Naive thymus-derived CD4-positive, alpha-beta T cell (primary cell): ENCODE measurements at regions of chr11 and their contacts with region 1.

Region 1: DNA sequence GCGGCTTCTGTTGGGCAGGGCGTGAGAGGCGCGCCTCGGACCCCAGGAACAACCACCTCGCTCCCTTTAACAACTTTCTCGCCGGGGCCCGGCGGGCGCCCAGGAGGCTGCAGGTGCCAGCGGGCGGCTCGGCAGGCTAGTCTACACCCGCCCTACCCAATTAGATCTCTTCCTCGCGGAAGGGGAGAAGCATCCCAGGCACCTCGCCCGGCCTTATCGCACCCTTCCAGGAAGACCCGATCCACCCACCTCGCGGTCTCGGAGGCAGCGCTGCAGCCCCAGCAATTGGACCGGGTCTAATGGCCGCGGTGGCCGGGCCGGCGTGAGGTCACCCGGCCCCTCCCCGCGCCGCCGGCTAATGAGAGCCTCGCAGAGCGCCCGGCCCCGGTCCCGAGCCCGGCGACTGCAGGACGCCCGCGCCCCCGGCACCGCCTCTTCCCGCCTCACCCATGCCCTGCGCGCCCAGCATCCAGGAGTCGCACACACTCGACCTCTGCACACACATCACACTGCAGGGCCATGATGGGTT is at the start of gene PLAAT3:
- DNase-seq: peak in 7 of 9 donors; percentile 11 to 41 (median 16)
- ATAC-seq: peak; percentile 70
- H3K4me3 ChIP-seq: peak within 1 kb of the TSS; percentile 75
- H3K4me3 Mint-ChIP-seq: peak within 1 kb of the TSS; percentile 82 to 89 (median 86)
- H3K27ac ChIP-seq: peak within 1 kb of the TSS; percentile 35
- H3K27ac Mint-ChIP-seq: peak within 1 kb of the TSS in 8 of 9 donors; percentile 52 to 74 (median 62)
- H3K4me1 ChIP-seq: peaks cover 0 to 3% of the 10 kb centered on the region in 2 donors
- H3K4me1 Mint-ChIP-seq: peaks cover 0 to 26% (median 12%) of the 10 kb centered on the region in 7 donors
- H3K27me3 ChIP-seq: no peaks in the 10 kb centered on the region
- H3K27me3 Mint-ChIP-seq: peaks cover 0 to 31% (median 0%) of the 10 kb centered on the region in 5 donors
- total RNA-seq, gene PLAAT3: 0.92 to 10.3 (median 2.0) TPM

Region 2: DNA sequence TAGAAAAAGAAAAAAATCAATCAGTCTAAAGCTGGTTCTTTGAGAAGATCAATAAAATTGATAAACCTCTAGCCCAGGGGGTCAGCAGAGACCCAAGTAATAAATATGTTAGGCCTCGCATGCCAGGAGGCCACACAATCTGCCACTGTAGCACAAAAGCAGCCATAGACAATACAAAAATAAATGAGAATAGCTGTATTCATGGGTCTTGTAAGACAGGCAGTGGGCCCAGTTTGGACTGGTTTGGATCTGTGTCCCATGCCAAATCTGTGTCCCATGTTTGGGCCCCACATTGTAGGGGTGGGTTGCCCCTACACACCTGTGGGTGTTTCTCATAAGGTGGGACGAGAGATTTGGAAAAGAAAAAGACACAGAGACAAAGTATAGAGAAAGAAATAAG is 84.2 kb before region 1 on chr11:
- CTCF ChIA-PET with region 1: no interaction called
- POLR2A ChIA-PET with region 1: no interaction called
- intact Hi-C with region 1: loop called (anchors 2 to 5 kb)
- DNase-seq: no peak
- ATAC-seq: no peak
- H3K4me3 ChIP-seq: no peak overlapping the region
- H3K4me3 Mint-ChIP-seq: peak overlapping the region in 7 of 10 donors; percentile 17 to 55 (median 39)
- H3K27ac ChIP-seq: peak overlapping the region; percentile 41
- H3K27ac Mint-ChIP-seq: peak overlapping the region; percentile 60 to 90 (median 85)
- H3K4me1 ChIP-seq: peaks cover 39 to 52% of the 10 kb centered on the region in 2 donors
- H3K4me1 Mint-ChIP-seq: peaks cover 35 to 69% (median 67%) of the 10 kb centered on the region in 7 donors
- H3K27me3 ChIP-seq: no peaks in the 10 kb centered on the region
- H3K27me3 Mint-ChIP-seq: peaks cover 0 to 2% (median 0%) of the 10 kb centered on the region in 5 donors

Region 3: GRCh38 chr11:63553741-63554151 is 60.5 kb before region 1 on chr11:
- CTCF ChIA-PET with region 1: no interaction called
- POLR2A ChIA-PET with region 1: no interaction called
- intact Hi-C with region 1: loop called in 1 of 2 experiments (anchors 5 kb)
- DNase-seq: peak in 7 of 9 donors; percentile 41 to 61 (median 53)
- ATAC-seq: peak; percentile 85
- H3K4me3 ChIP-seq: peak overlapping the region; percentile 51
- H3K4me3 Mint-ChIP-seq: peak overlapping the region; percentile 78 to 95 (median 88)
- H3K27ac ChIP-seq: peak overlapping the region; percentile 54
- H3K27ac Mint-ChIP-seq: peak overlapping the region; percentile 88 to 100 (median 96)
- H3K4me1 ChIP-seq: peaks cover 35 to 51% of the 10 kb centered on the region in 2 donors
- H3K4me1 Mint-ChIP-seq: peaks cover 33 to 81% (median 77%) of the 10 kb centered on the region in 7 donors
- H3K27me3 ChIP-seq: no peaks in the 10 kb centered on the region
- H3K27me3 Mint-ChIP-seq: no peaks in the 10 kb centered on the region

Region 4: DNA sequence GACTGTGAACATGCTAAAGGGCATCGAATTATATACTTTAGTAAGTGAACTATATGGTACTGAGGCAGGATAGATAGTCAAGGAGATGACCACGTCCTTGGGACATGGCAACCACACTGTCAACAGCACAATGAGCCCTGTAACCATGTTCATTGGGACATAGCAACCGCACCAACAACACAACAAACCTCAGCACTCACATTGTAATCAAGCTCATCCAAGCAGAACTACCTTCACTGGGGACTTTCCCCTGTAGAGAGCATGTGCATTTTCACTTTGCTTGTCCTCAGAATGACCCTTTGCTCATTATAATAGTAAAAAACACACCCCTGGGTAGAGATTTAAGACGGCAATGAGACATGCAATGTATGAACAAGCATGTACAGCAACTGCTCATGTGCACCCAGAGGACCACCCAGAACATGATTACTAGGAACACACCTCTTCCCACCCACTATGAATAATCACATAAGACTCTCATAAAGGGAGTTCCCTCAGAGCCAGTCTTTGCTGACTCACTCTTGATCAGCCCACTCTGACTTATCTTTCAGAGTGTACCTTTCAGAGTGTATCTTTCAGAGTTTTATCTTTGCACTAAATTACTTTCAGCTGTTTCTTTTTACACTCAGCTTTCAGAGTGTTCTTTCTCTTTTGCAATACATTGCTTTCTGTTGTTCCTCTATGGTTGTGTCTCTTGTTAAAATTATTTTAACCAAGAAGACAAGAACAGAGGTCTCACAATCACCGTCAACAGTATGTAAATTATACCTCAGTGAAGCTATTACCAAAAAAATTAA is 47.0 kb before region 1 on chr11:
- CTCF ChIA-PET with region 1: no interaction called
- POLR2A ChIA-PET with region 1: no interaction called
- intact Hi-C with region 1: loop called (anchors 5 kb)
- DNase-seq: peak in 8 of 9 donors; percentile 31 to 84 (median 62)
- ATAC-seq: peak; percentile 88
- H3K4me3 ChIP-seq: no peak overlapping the region
- H3K4me3 Mint-ChIP-seq: peak overlapping the region in 9 of 10 donors; percentile 7 to 62 (median 42)
- H3K27ac ChIP-seq: peak overlapping the region; percentile 44
- H3K27ac Mint-ChIP-seq: peak overlapping the region; percentile 56 to 94 (median 86)
- H3K4me1 ChIP-seq: peaks cover 22 to 25% of the 10 kb centered on the region in 2 donors
- H3K4me1 Mint-ChIP-seq: peaks cover 26 to 55% (median 47%) of the 10 kb centered on the region in 7 donors
- H3K27me3 ChIP-seq: no peaks in the 10 kb centered on the region
- H3K27me3 Mint-ChIP-seq: peaks cover 0 to 19% (median 0%) of the 10 kb centered on the region in 5 donors

Region 5: GRCh38 chr11:63573881-63574855 is 40.0 kb before region 1 on chr11:
- CTCF ChIA-PET with region 1: interaction called, 4 read pairs
- POLR2A ChIA-PET with region 1: no interaction called
- intact Hi-C with region 1: loop called (anchors 5 kb)
- DNase-seq: peak in 4 of 9 donors; percentile 30 to 41 (median 35)
- ATAC-seq: peak; percentile 82
- H3K4me3 ChIP-seq: peak overlapping the region; percentile 43
- H3K4me3 Mint-ChIP-seq: peak overlapping the region; percentile 77 to 95 (median 88)
- H3K27ac ChIP-seq: peak overlapping the region; percentile 33
- H3K27ac Mint-ChIP-seq: peak overlapping the region; percentile 81 to 99 (median 93)
- H3K4me1 ChIP-seq: peaks cover 12 to 13% of the 10 kb centered on the region in 2 donors
- H3K4me1 Mint-ChIP-seq: peaks cover 18 to 40% (median 30%) of the 10 kb centered on the region in 7 donors
- H3K27me3 ChIP-seq: no peaks in the 10 kb centered on the region
- H3K27me3 Mint-ChIP-seq: peaks cover 0 to 19% (median 0%) of the 10 kb centered on the region in 5 donors

Region 6: DNA sequence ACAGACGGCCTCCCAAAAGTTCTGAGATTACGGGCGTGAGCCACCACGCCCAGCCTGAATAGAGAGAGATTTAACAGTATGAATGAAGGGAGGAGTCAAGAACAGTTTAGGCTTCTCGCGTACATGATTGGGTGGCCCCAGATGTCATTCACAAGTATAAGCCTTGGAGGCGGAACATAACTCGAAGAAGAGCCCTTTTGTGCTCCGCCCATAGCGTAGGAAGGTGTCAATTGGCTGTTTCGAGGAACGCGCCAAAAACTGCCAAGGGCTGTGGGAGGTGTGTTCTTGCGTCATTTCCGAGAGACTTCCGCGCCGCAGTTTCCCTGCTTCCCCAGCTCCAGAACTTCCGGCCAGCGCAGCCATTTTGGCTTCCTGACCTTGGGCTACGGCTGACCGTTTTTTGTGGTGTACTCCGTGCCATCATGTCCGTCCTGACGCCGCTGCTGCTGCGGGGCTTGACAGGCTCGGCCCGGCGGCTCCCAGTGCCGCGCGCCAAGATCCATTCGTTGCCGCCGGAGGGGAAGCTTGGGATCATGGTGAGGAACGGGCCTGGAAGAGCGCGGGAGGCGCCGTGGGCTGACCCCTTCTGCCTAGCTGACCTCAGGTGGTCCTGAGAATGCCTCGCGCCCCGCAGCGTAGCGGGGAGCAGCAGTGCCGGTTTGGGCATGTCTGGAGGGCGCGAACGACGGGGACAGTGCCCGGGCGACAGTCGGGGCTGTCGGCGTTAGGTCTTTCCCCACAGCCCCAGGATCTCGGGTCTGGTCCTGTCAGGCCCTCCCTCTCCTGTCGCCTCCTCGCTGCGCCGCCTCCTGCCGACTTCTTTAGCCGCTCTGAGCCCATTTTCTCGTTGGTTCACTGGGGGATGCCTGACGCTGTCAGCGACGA is 360.3 kb after region 1 on chr11 and contains the start of gene COX8A:
- CTCF ChIA-PET with region 1: no interaction called
- POLR2A ChIA-PET with region 1: no interaction called
- intact Hi-C with region 1: no loop called
- DNase-seq: peak; percentile 65 to 97 (median 94)
- ATAC-seq: peak; percentile 99
- H3K4me3 ChIP-seq: peak within 1 kb of the TSS; percentile 87
- H3K4me3 Mint-ChIP-seq: peak within 1 kb of the TSS; percentile 98 to 100 (median 99)
- H3K27ac ChIP-seq: peak within 1 kb of the TSS; percentile 94
- H3K27ac Mint-ChIP-seq: peak within 1 kb of the TSS; percentile 94 to 99 (median 99)
- H3K4me1 ChIP-seq: peaks cover 10 to 11% of the 10 kb centered on the region in 2 donors
- H3K4me1 Mint-ChIP-seq: peaks cover 12 to 36% (median 29%) of the 10 kb centered on the region in 7 donors
- H3K27me3 ChIP-seq: no peaks in the 10 kb centered on the region
- H3K27me3 Mint-ChIP-seq: peaks cover 0 to 2% (median 0%) of the 10 kb centered on the region in 5 donors
- total RNA-seq, gene COX8A: 90.9 to 363 (median 105) TPM